HEK293T (cell line): ENCODE measurements at regions of chr1 and their contacts with region 1.

Region 1: DNA sequence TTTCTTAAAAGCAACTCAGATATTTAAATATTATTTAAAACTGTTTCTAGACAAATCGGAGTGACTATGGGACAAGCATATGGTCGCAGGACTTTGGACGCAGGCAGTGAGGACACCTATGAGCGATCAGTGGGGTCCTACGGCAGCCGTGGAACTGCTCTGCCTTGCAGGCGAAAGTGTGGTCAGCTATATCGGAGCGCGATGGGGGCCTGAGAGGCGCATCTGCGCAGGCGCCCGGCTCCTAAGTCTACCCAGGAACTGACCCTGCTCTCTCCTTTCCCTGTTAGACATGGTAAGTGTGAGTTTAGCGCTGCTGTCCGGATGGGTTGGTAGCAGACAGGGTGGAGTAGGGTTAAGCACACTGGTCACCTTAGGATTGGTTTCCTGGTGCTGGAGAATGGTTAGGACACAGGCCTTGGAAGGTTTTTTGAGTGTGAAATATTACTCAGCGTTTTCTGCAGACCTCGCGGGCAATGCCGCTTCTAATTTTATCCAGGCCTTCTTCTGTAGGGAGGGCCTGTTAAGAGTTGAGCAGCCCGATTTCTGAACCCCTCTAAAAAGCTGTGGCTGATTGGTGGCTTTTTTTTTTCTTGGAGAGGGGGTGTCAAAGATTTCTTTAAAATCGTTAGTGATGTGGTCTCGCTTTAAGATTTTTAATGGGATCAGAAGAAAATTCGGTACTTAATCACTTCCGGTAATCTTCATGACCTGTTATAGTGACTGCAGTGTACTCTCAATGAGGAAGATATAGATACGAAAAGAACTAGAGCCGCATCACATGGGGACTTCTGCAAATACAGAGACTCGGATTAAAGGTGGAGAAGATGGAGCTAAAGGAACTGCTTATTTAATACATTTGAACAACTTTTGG is at the start of gene RABGGTB:
- DNase-seq: peak; percentile 99

Region 2: GRCh38 chr1:75615613-75616435 is 170.4 kb before region 1 on chr1:
- CTCF ChIA-PET with region 1: no interaction called
- POLR2A ChIA-PET with region 1: interaction called, 18 read pairs
- DNase-seq: peak; percentile 71

Region 3: DNA sequence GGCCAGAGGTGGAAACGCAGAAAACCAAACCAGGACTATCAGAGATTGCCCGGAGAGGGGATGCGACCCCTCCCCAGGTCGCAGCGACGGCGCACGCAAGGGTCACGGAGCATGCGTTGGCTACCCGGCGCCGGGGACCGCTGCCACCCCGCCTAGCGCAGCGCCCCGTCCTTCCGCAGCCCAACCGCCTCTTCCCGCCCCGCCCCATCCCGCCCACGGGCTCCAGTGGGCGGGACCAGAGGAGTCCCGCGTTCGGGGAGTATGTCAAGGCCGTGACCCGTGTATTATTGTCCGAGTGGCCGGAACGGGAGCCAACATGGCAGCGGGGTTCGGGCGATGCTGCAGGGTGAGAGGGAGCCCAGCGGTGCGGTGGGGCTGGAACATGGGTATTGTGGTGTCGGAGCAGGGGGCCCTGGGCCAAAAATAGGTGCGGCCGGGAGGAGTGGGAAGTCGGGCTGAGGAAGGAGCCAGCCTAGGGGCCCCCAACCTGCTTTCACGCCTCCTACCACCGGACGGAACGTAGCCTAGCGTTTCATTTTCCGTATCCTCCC is 61.7 kb before region 1 on chr1 and contains the start of gene ACADM:
- CTCF ChIA-PET with region 1: no interaction called
- POLR2A ChIA-PET with region 1: interaction called, 25 read pairs
- DNase-seq: peak; percentile 85

Region 4: DNA sequence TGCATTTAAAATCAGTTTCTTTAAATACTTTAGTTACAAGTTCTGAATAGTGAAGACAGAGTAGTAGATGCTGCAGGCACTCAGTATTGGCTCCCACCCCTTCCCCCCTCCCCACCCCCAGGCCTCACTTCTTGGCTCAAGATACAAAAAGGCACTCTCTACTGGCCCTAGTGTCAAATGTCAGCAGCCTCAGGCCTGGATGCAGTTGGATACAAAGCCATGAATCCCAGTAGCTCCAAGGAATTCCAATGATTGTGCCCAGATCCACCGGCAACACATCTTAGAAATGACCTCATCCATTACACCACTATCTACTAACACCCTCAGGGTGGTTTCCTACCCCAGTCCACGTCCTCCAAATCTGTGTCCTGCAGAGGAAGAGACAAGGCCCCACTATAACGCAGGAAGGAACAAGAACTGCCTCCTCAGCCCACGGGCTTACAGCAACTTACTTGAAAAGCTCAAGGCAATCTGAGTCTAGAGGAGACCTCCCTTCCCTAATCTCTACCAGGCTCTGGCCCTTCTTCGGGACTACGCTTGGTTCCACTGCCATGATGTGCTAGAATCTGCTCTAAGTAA is 44.1 kb before region 1 on chr1:
- CTCF ChIA-PET with region 1: no interaction called
- POLR2A ChIA-PET with region 1: no interaction called
- DNase-seq: no peak

Region 5: DNA sequence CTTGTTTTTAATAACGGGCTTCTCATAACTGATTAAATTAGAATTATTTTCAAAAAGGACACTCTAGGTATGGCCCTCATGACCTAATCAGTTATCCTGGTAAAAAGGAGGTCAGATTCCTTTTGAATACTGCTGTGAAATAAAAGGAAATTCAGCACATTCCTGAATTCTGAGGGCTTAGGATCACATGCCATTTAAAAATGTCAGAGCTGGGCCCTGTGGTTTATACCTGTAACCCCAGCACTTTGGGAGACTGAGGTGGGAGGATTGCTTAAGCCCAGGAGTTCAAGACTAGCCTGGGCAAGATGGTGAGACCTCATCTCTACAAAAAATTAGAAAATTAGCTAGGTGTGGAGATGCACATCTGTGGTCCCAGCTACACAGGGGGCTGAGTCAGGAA is 18.2 kb before region 1 on chr1:
- CTCF ChIA-PET with region 1: no interaction called
- POLR2A ChIA-PET with region 1: interaction called, 21 read pairs
- DNase-seq: no peak

Region 6: DNA sequence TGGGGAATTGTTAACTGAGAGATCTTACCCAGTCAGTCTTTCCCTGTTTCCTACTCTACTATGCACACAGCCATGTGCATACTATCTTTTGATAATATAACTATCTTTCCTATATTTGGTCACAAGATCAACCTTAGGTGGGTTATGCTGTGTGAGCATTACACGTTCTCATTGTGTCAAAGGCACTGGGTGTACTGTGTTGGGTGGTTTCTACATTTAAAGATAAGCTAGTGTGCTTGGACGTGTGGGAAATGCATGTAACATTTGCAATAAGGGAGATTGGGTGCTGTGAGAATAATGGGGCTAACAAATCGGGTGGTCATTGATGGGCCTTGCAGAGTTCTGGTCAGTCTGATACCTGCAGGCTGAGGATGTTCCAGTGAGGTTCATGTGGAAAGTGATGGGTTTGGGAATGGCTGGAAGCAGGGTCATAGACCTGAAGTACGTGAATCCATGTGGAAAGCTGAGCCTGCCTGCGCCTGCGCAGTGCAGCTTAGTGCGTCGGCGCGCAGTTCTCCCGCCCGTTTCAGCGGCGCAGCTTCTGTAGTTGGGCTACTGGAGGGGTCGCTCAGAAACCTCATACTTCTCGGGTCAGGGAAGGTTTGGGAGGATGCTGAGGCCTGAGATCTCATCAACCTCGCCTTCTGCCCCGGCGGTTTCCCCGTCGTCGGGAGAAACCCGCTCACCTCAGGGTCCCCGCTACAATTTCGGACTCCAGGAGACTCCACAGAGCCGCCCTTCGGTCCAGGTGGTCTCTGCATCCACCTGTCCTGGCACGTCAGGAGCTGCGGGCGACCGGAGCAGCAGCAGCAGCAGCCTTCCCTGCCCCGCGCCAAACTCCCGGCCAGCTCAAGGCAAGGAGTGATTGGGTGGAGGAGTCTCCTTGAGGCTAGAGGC is 10.4 kb after region 1 on chr1 and contains the start of gene MSH4:
- CTCF ChIA-PET with region 1: no interaction called
- POLR2A ChIA-PET with region 1: interaction called, 15 read pairs
- DNase-seq: peak; percentile 21